Caco-2 (cell line): ENCODE measurements at regions of chr2 and their contacts with region 1.

Region 1: DNA sequence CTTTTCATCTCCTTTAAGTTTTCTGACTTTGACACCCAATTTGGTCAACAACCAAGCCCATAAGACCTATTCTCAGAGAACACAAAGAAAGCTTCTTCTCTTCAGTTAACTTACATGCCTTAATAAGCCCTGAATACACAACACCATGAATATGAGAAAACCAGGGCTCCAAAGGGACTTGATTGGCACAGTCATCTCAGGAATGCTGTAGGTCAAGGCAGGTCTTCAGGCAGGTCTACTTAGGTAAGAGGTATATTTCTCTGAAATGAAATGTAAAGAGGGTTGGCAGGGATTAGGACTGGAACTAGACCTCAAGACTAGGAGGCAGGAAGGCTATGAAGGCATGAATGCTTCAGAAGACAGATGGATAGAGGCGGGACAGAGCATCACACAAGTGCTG is 24.4 kb upstream of the EIF2AK3 start:
- DNase-seq: peak; percentile 84 to 85
- H3K4me3 ChIP-seq: no peak overlapping the region
- H3K4me3 Mint-ChIP-seq: peak overlapping the region; percentile 26
- H3K27ac Mint-ChIP-seq: peak overlapping the region; percentile 85
- H3K4me1 ChIP-seq: peaks cover 23% of the 10 kb centered on the region
- H3K4me1 Mint-ChIP-seq: peaks cover 12% of the 10 kb centered on the region
- H3K27me3 ChIP-seq: no peaks in the 10 kb centered on the region
- H3K27me3 Mint-ChIP-seq: no peaks in the 10 kb centered on the region
- CTCF ChIP-seq: no peak

Region 2: GRCh38 chr2:88669371-88670214 is 17.9 kb after region 1 on chr2:
- CTCF ChIA-PET with region 1: interaction called, 4 read pairs
- POLR2A ChIA-PET with region 1: interaction called, 3 read pairs
- intact Hi-C with region 1: loop called (anchors 1 kb)
- DNase-seq: peak; percentile 49 to 68
- H3K4me3 ChIP-seq: no peak overlapping the region
- H3K4me3 Mint-ChIP-seq: no peak overlapping the region
- H3K27ac Mint-ChIP-seq: no peak overlapping the region
- H3K4me1 ChIP-seq: peaks cover 16% of the 10 kb centered on the region
- H3K4me1 Mint-ChIP-seq: peaks cover 17% of the 10 kb centered on the region
- H3K27me3 ChIP-seq: no peaks in the 10 kb centered on the region
- H3K27me3 Mint-ChIP-seq: no peaks in the 10 kb centered on the region
- CTCF ChIP-seq: peak; percentile 74 to 78

Region 3: GRCh38 chr2:88729061-88729745 is 77.5 kb after region 1 on chr2:
- CTCF ChIA-PET with region 1: no interaction called
- POLR2A ChIA-PET with region 1: no interaction called
- intact Hi-C with region 1: no loop called
- DNase-seq: no peak
- H3K4me3 ChIP-seq: no peak overlapping the region
- H3K4me3 Mint-ChIP-seq: no peak overlapping the region
- H3K27ac Mint-ChIP-seq: no peak overlapping the region
- H3K4me1 ChIP-seq: peaks cover 4% of the 10 kb centered on the region; the same call in 1 of the 2 replicates
- H3K4me1 Mint-ChIP-seq: peaks cover 6% of the 10 kb centered on the region
- H3K27me3 ChIP-seq: no peaks in the 10 kb centered on the region
- H3K27me3 Mint-ChIP-seq: no peaks in the 10 kb centered on the region
- CTCF ChIP-seq: no peak